WTC11 (cell line): ENCODE measurements at regions of chr20 and their contacts with region 1.

Region 1: GRCh38 chr20:36199345-36200257 is 36.7 kb upstream of the AAR2 start:
- DNase-seq: peak; percentile 93
- ATAC-seq: peak; percentile 86
- H3K4me3 Mint-ChIP-seq: no peak overlapping the region
- H3K27ac Mint-ChIP-seq: no peak overlapping the region
- H3K4me1 Mint-ChIP-seq: peaks cover 4% of the 10 kb centered on the region
- H3K27me3 Mint-ChIP-seq: no peaks in the 10 kb centered on the region
- CTCF ChIP-seq: peak; percentile 86

Region 2: DNA sequence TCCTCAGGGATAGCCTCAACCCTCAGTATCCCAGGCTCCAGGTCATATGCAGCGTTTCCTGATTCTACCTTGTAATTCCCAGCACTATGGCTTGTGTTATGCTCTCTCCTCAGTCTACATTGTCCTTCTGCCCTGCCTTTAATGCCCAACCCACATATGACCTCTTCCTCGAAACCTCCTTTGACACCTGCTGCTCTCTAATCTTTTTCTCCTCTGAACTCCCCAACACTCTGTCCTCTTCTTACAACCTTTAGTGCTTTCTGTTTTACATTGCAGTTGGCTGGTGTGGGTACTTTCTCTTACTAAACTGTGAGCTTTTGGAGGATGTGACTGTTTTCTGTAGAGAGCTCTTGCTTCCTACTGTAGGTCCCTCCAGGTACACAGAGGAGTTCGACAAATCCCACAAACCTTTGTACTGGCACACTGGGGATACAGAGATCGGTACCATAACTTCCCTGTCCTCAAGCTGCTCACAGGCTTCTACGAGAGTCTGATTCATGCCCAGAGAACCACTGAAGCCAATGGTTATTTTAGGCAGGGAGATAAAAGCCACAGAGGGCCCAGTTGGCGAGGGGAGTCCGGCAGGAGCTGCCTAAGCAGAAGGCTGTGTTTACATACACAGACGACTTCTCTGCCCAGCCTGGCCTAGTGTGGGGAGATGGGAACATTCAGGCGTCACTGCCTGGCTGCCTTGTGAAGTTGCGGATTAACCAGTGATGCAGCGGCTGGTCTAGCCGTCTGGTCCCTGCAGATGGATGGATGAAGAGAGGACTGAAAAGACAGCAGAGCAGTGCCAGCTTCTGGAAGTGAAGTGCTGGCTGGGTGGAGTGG is 53.5 kb before region 1 on chr20:
- CTCF ChIA-PET with region 1: interaction called, 13 read pairs
- POLR2A ChIA-PET with region 1: no interaction called
- DNase-seq: no peak
- ATAC-seq: peak; percentile 30; the same call in 1 of the 2 replicates
- H3K4me3 Mint-ChIP-seq: no peak overlapping the region
- H3K27ac Mint-ChIP-seq: no peak overlapping the region
- H3K4me1 Mint-ChIP-seq: no peaks in the 10 kb centered on the region
- H3K27me3 Mint-ChIP-seq: no peaks in the 10 kb centered on the region; the same call in 1 of the 2 replicates
- CTCF ChIP-seq: no peak

Region 3: GRCh38 chr20:36184816-36185776 is 14.5 kb before region 1 on chr20:
- CTCF ChIA-PET with region 1: interaction called, 13 read pairs
- POLR2A ChIA-PET with region 1: no interaction called
- DNase-seq: no peak
- ATAC-seq: no peak
- H3K4me3 Mint-ChIP-seq: no peak overlapping the region
- H3K27ac Mint-ChIP-seq: no peak overlapping the region
- H3K4me1 Mint-ChIP-seq: no peaks in the 10 kb centered on the region
- H3K27me3 Mint-ChIP-seq: no peaks in the 10 kb centered on the region
- CTCF ChIP-seq: no peak

Region 4: DNA sequence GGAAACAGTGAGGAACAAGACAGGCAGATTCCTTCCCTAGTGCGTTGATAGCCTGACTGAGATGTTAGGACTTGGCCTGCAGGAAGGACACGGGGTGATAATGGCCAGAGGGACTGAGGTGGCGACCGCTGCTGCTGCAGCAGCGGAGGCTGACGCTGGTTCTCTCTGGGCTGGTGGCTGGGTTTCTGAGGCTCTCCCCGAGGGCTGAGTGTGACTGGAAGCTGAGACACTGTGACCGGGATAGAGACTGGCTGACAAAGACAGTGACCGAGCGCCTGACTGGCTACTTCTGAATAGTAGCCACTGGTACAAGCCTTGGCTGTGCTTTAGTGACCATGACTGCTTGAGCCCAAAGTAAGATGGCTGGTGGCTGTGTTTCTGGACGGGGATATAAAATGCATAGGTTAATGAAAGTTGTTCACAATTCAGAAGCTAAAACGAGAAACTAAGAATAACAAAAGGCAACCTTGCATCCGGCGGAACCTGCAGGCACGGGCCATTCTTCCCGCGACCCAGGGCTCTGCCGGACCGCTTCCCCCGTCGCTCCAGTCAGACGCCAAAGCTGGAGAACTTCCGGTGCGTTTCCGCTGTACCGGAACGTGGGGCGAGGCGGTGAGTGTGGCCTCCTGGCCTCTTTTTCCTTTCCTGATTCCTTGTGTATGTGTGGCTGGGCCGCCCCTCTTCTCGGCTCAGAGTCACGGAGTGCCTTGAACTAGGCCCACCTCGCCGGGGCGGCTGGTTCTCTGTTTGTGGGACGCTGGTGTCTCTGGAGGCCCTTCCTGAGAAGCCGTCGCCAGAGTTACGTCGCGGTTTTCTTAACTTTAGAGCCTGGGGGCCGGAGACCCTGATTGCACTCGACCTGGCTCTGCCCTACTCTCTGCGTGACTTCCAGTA is 36.5 kb after region 1 on chr20 and contains the start of gene AAR2:
- CTCF ChIA-PET with region 1: interaction called, 16 read pairs
- POLR2A ChIA-PET with region 1: no interaction called
- DNase-seq: peak; percentile 78
- ATAC-seq: peak; percentile 94
- H3K4me3 Mint-ChIP-seq: peak within 1 kb of the TSS; percentile 93
- H3K27ac Mint-ChIP-seq: peak within 1 kb of the TSS; percentile 86
- H3K4me1 Mint-ChIP-seq: peaks cover 12% of the 10 kb centered on the region
- H3K27me3 Mint-ChIP-seq: no peaks in the 10 kb centered on the region; the same call in 1 of the 2 replicates
- CTCF ChIP-seq: no peak
- total RNA-seq, gene AAR2: 22.5 to 24.9 TPM (median 24.7 TPM) in 3 replicates

Region 5: DNA sequence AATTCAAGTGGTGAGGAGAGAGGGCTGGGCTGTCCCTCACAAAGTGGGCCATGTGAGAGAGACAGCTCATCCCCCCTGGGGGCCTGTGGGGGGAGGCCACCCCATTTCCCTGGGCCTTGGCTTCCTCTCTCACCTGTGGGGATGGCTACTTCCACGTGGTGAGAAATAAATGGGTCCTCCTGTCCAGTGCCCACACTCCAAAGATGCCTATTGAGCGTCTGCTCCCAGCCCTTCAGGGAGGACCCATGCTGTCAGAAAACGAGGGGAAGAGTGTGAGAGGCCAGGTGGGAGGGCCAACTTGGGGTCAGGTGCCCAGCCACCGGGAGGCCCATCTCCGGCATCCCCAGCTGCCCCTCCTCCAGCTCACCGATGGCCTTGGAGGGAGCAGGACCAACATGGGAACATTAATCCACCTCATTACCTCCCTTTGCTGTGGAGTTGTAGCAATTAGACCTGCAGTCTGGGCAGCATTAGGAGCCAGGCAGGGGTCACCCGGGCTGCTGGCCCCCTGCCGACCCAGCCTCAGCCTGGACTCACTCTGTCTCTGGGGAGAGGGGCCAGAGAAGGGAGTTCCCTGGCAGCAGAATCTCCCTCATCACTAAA is 131.5 kb after region 1 on chr20:
- CTCF ChIA-PET with region 1: interaction called, 11 read pairs
- POLR2A ChIA-PET with region 1: no interaction called
- DNase-seq: no peak
- ATAC-seq: no peak
- H3K4me3 Mint-ChIP-seq: no peak overlapping the region
- H3K27ac Mint-ChIP-seq: no peak overlapping the region
- H3K4me1 Mint-ChIP-seq: peaks cover 42% of the 10 kb centered on the region
- H3K27me3 Mint-ChIP-seq: peaks cover 66% of the 10 kb centered on the region
- CTCF ChIP-seq: no peak

Region 6: DNA sequence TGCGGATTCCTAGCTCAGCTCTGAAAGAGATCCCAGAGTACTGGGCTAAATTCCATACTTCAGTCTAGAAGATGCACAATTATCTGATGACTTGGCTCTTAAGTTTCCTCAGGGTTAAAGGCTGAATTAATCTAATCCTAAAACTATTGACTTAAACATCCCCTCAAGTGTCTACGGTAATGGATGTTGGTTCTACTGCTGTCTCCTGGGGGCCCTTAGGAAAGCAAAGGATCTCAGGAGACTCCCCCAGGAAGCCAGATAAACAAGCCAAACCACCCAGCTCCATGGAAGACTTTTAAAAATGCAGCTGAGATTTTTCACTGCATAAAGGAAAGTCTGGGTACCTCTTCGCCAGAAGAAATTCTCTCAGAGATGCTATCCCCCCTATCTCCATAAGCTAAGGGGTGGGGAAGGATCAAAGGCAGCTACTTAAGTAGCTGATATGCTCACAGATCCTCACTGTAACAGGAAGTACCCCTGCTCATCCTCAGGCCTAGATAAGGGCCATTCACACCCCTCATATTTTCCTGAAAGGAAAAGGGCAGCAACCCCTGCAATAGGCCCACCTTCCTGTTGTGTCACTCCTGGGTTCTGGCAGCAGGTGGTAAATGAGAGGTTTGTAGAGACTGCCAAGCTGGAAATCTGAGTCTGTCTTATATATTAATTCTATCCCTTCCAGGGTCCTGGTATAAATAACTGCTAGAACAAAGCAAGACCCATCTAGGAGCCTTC is 537.0 kb after region 1 on chr20:
- CTCF ChIA-PET with region 1: no interaction called
- POLR2A ChIA-PET with region 1: interaction called, 12 read pairs
- DNase-seq: no peak
- ATAC-seq: no peak; the same call in 1 of the 2 replicates
- H3K4me3 Mint-ChIP-seq: no peak overlapping the region
- H3K27ac Mint-ChIP-seq: peak overlapping the region; percentile 53
- H3K4me1 Mint-ChIP-seq: peaks cover 28% of the 10 kb centered on the region
- H3K27me3 Mint-ChIP-seq: no peaks in the 10 kb centered on the region
- CTCF ChIP-seq: no peak